Panc1 (cell line): ENCODE measurements at regions of chr17 and their contacts with region 1.

Region 1: GRCh38 chr17:77957857-77958715 is at the start of gene TNRC6C:
- DNase-seq: peak; percentile 79
- ATAC-seq: peak; percentile 95
- H3K4me3 ChIP-seq: peak within 1 kb of the TSS; percentile 70 to 71
- H3K27ac ChIP-seq: peak within 1 kb of the TSS; percentile 21; the same call in 1 of the 2 replicates
- H3K4me1 ChIP-seq: peaks cover 25% of the 10 kb centered on the region
- H3K27me3 ChIP-seq: peaks cover 19% of the 10 kb centered on the region
- CTCF ChIP-seq: peak; percentile 32; the same call in 1 of the 2 replicates
- total RNA-seq, gene TNRC6C: 10.1 TPM

Region 2: GRCh38 chr17:77542551-77543490 is 415.3 kb before region 1 on chr17:
- CTCF ChIA-PET with region 1: no interaction called
- POLR2A ChIA-PET with region 1: no interaction called
- in situ Hi-C with region 1: no loop called
- intact Hi-C with region 1: loop called (anchors 5 kb)
- DNase-seq: peak; percentile 48
- ATAC-seq: peak; percentile 96
- H3K4me3 ChIP-seq: no peak overlapping the region
- H3K27ac ChIP-seq: no peak overlapping the region
- H3K4me1 ChIP-seq: 0 out of 2 replicates have a peak, but pooled peaks cover 2% of the 10 kb centered on the region
- H3K27me3 ChIP-seq: peaks cover 2% of the 10 kb centered on the region; the same call in 1 of the 2 replicates
- CTCF ChIP-seq: peak; percentile 98

Region 3: GRCh38 chr17:77640252-77640651 is 317.8 kb before region 1 on chr17:
- CTCF ChIA-PET with region 1: no interaction called
- POLR2A ChIA-PET with region 1: interaction called, 12 read pairs
- in situ Hi-C with region 1: no loop called
- intact Hi-C with region 1: no loop called
- DNase-seq: no peak
- ATAC-seq: no peak
- H3K4me3 ChIP-seq: no peak overlapping the region
- H3K27ac ChIP-seq: no peak overlapping the region
- H3K4me1 ChIP-seq: no peaks in the 10 kb centered on the region
- H3K27me3 ChIP-seq: peaks cover 24% of the 10 kb centered on the region
- CTCF ChIP-seq: no peak

Region 4: DNA sequence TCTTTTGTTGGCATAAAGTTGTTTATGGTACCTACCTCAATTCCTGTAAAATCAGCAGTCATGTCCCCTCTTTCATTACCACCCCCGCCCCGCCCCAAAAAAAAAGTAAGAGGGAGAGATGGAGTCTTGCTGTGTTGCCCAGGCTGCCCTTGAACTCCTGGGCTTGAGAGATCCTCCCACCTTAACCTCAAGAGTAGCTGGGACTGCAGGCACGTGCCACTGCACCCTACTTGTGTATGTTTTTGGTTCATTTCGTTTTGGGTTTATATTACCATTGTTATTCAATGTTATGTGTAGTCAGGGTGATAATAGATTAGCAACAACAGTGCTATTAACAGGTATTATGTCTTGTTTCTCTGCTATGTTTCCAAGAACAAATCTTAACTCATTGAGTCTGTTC is 16.3 kb after region 1 on chr17:
- CTCF ChIA-PET with region 1: interaction called, 4 read pairs
- POLR2A ChIA-PET with region 1: interaction called, 11 read pairs
- in situ Hi-C with region 1: no loop called
- intact Hi-C with region 1: no loop called
- DNase-seq: no peak
- ATAC-seq: no peak
- H3K4me3 ChIP-seq: no peak overlapping the region
- H3K27ac ChIP-seq: no peak overlapping the region
- H3K4me1 ChIP-seq: no peaks in the 10 kb centered on the region
- H3K27me3 ChIP-seq: no peaks in the 10 kb centered on the region; the same call in 1 of the 2 replicates
- CTCF ChIP-seq: no peak

Region 5: GRCh38 chr17:78063489-78063888 is 105.4 kb after region 1 on chr17:
- CTCF ChIA-PET with region 1: no interaction called
- POLR2A ChIA-PET with region 1: interaction called, 10 read pairs
- in situ Hi-C with region 1: no loop called
- intact Hi-C with region 1: no loop called
- DNase-seq: no peak
- ATAC-seq: no peak
- H3K4me3 ChIP-seq: no peak overlapping the region
- H3K27ac ChIP-seq: no peak overlapping the region
- H3K4me1 ChIP-seq: no peaks in the 10 kb centered on the region
- H3K27me3 ChIP-seq: no peaks in the 10 kb centered on the region
- CTCF ChIP-seq: no peak

Region 6: DNA sequence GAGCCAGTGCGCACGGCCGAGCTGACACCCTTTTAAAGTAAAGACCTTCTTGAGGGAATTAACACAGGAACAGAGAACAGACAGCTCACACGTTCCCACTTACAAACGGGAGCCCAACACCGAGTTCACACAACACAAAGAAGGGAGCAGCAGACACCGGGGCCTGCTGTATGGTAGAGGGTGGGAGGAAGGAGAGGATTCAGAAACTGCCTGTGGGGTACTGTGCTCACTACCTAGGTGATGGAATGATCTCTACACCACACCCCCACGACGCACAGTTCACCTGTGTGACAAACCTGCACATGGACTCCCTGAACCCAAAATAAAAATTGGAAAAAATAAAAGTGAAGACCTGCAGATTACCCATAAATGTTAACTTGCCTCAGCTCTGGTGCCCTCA is 138.0 kb after region 1 on chr17:
- CTCF ChIA-PET with region 1: no interaction called
- POLR2A ChIA-PET with region 1: no interaction called
- in situ Hi-C with region 1: no loop called
- intact Hi-C with region 1: no loop called
- DNase-seq: no peak
- ATAC-seq: no peak
- H3K4me3 ChIP-seq: no peak overlapping the region
- H3K27ac ChIP-seq: no peak overlapping the region
- H3K4me1 ChIP-seq: no peaks in the 10 kb centered on the region
- H3K27me3 ChIP-seq: no peaks in the 10 kb centered on the region
- CTCF ChIP-seq: no peak